HepG2 (cell line): ENCODE measurements at regions of chr5 and their contacts with region 1.

Region 1: GRCh38 chr5:141260458-141261237 is 15.5 kb downstream of the PCDHB15 start:
- DNase-seq: no peak
- ATAC-seq: no peak
- H3K4me3 ChIP-seq: no peak overlapping the region
- H3K27ac ChIP-seq: no peak overlapping the region
- H3K4me1 ChIP-seq: no peaks in the 10 kb centered on the region
- H3K27me3 ChIP-seq: no peaks in the 10 kb centered on the region; a peak in 1 of 5 replicates
- CTCF ChIP-seq: no peak
- EP300 ChIP-seq: no peak
- POLR2A ChIP-seq: no peak
- RAD21 ChIP-seq: no peak

Region 2: GRCh38 chr5:140764177-140765020 is 496.2 kb before region 1 on chr5:
- CTCF ChIA-PET with region 1: no interaction called
- POLR2A ChIA-PET with region 1: no interaction called
- in situ Hi-C with region 1: loop called (anchors 25 kb)
- intact Hi-C with region 1: no loop called
- DNase-seq: no peak
- ATAC-seq: no peak
- H3K4me3 ChIP-seq: no peak overlapping the region
- H3K27ac ChIP-seq: no peak overlapping the region
- H3K4me1 ChIP-seq: no peaks in the 10 kb centered on the region
- H3K27me3 ChIP-seq: no peaks in the 10 kb centered on the region
- CTCF ChIP-seq: no peak
- EP300 ChIP-seq: no peak
- POLR2A ChIP-seq: no peak
- RAD21 ChIP-seq: no peak